Calu3 (cell line): ENCODE measurements at regions of chr4 and their contacts with region 1.

Region 1: GRCh38 chr4:70651864-70652506 is 14.3 kb downstream of the JCHAIN start:
- DNase-seq: no peak
- H3K4me3 Mint-ChIP-seq: no peak overlapping the region
- H3K27ac Mint-ChIP-seq: no peak overlapping the region
- H3K4me1 Mint-ChIP-seq: no peaks in the 10 kb centered on the region
- H3K27me3 Mint-ChIP-seq: no peaks in the 10 kb centered on the region
- CTCF ChIP-seq: peak; percentile 29

Region 2: DNA sequence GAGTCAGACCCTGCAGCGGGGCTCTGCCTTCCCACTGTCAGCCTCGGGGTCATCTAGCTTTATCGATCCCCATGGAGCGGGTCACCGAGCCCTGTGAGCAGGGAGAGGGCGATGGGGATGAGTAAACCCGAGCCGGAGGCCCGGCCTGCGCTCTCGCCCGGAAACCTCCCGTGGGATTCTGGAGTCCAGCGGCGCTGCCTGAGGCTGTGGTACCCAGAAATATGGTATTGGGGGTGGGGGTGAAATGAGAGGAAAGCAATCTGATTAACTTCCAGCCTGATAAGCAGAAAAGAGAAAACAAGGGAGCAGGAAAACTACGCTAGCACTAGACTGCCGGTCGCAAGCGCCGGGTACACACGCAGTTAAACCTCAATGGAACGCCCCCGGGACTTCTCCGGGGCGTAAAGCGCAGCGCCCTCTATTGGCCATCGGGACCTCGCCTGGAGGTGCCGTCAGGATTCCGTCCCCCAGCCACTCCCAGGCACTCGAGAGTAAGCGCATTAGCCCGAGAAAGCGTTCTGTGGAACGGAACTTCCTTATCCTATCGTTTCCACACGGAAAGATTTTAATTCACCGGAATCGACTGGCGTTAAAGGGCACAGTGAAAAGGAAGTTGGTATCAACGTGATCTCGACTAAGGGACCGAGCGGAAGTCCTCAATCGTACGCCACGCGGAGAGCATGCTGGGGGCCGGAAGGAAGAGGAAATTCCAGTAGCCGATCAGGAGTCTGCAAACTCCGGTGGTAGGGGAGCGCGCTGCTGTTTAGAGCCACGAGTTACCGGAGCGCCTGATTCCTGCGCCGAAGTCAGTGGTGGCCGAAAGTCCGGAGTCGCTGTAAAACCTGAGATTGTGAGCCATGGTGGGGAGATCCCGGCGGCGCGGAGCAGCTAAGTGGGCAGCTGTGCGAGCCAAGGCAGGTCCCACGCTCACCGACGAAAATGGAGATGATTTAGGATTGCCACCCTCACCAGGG is 36.1 kb after region 1 on chr4 and contains the start of gene UTP3:
- CTCF ChIA-PET with region 1: no interaction called
- intact Hi-C with region 1: loop called (anchors 1 kb)
- DNase-seq: peak; percentile 90
- H3K4me3 Mint-ChIP-seq: peak within 1 kb of the TSS; percentile 90
- H3K27ac Mint-ChIP-seq: peak within 1 kb of the TSS; percentile 84
- H3K4me1 Mint-ChIP-seq: peaks cover 13% of the 10 kb centered on the region
- H3K27me3 Mint-ChIP-seq: no peaks in the 10 kb centered on the region
- CTCF ChIP-seq: peak; percentile 70
- total RNA-seq, gene UTP3: 22.2 and 24.2 TPM in 2 replicates

Region 3: GRCh38 chr4:70778888-70779422 is 127.0 kb after region 1 on chr4:
- CTCF ChIA-PET with region 1: no interaction called
- intact Hi-C with region 1: no loop called
- DNase-seq: no peak
- H3K4me3 Mint-ChIP-seq: no peak overlapping the region
- H3K27ac Mint-ChIP-seq: no peak overlapping the region
- H3K4me1 Mint-ChIP-seq: no peaks in the 10 kb centered on the region
- H3K27me3 Mint-ChIP-seq: no peaks in the 10 kb centered on the region
- CTCF ChIP-seq: no peak

Region 4: DNA sequence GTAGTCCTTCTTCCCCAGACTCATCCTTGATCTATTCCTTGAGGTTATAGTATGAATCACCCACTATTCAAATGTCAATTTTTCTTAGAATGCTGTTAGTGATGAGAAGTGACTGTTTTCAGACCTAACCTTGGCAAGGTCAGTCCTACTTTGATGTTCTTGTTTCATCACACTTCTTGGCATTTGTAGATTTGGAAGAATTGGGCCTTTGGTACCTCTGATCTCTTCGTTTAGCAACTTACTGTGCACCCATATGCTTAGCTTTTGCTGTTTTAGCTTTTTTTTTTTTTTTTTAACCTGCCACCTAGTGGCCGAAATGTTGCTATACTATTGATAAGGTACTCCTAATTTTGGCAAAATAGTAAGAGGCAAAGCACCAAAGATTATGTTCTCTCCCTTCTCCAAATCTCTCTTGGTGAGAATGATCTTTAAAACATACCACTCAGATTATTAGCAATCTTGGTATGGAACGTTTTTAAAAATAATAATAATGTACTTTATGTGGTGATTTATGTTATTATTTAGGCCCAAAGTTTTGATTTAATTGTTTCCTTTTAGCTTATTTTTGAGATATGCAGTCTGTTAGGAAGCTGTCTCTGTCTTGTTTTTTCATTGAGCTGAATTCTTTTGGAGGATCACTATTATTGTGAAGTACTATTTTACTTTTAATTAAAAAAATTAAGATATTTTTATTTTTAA is 358.1 kb after region 1 on chr4:
- CTCF ChIA-PET with region 1: interaction called, 6 read pairs
- intact Hi-C with region 1: loop called (anchors 5 kb)
- DNase-seq: no peak
- H3K4me3 Mint-ChIP-seq: no peak overlapping the region
- H3K27ac Mint-ChIP-seq: no peak overlapping the region
- H3K4me1 Mint-ChIP-seq: no peaks in the 10 kb centered on the region
- H3K27me3 Mint-ChIP-seq: no peaks in the 10 kb centered on the region
- CTCF ChIP-seq: peak; percentile 15